Endothelial cell of umbilical vein (primary cell): ENCODE measurements at regions of chr10 and their contacts with region 1.

Region 1: DNA sequence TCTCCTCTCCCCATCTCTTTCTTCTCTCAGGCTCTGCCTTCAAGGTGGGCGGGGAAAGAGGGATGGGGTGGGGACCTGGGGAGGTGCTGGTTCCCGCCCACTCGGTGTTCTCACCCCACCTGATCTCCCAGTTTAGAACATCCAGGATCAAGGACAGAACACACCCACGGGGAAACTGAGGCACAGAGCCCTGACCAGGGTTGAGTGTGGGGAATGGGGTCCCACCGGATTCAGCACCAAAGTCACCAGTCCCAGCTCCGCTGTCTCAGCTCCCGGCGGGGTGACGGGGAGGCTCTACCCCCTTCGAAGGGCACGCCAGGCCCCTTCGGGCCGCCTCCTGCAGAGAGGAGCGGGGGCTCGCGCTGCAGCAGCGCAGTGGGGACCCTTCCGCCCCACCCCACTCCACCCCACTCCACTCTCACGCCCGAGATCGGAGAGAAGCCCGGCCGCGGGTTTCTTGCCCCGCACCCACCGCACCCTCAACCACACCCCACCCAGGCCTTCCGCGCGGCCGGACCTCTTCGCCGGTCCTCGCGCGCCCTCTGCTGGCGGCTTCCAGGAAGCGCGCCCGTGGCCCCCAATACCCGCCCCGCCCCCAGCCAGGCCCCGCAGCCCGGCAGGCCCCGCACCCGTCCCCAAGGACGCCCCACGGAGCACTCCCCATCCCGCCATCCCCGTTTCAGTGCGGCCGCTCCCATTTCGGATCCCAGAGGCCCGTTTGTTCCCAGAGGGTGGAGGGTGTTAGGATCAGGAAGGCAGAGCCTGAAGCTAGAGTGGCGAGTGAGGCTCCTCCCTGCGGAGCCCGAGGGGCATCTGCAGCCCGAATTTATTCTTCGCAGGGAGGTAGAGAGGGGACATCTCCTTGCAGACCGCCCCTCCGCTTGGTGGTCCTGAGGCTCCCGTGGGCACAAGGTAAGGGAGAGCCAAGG is 18.0 kb downstream of the POLL start:
- DNase-seq: peak; percentile 62
- H3K4me3 ChIP-seq: peak overlapping the region in 2 of 3 experiments; percentile 18 to 39
- H3K27ac ChIP-seq: no peak overlapping the region
- H3K4me1 ChIP-seq: peaks cover 7% of the 10 kb centered on the region
- H3K27me3 ChIP-seq: peaks cover 26 to 27% of the 10 kb centered on the region in 2 experiments
- CTCF ChIP-seq: peak; percentile 46 to 90
- POLR2A ChIP-seq: no peak

Region 2: DNA sequence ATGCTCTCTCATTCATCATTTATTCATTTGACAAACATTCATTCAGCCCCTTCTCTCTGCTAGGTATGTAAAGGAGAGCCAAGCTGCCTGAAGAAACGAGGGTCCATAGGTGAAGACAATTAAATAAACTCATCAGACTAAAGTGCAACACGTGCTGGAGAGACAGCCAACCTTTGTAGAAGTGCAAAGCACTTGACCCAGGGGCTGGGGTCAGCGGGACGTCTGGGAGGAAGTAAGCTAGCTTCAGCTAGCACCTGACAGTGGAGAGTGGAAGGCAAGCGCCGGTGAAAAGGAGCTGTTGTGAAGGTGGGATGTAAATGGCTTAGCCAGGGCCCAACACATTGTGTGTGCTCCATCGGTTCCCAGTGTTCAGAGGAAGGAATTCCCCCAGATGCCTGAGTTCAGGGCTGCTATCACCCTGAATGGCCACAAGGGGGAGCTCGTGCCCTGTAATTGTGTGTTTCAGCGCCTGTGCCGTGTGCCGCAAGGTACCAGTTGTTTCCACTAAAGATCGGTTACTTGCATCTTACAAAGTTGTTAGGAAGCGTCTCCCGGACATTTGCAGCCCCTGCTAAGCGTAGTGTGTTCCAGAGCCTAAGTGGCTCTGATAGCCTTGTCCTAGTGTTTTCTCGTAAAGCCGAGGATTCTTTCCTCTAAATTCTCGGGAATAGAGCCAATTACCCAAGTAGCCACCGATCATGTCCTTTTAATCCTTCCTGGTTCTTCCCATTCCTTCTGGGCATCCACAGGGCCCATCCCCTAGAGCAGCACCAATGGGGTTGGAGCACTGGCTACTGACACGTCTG is 408.4 kb before region 1 on chr10:
- CTCF ChIA-PET with region 1: interaction called, 19 read pairs
- POLR2A ChIA-PET with region 1: no interaction called
- dilution Hi-C with region 1: no loop called
- intact Hi-C with region 1: loop called (anchors 1 kb)
- DNase-seq: peak; percentile 74
- H3K4me3 ChIP-seq: no peak overlapping the region
- H3K27ac ChIP-seq: no peak overlapping the region
- H3K4me1 ChIP-seq: no peaks in the 10 kb centered on the region
- H3K27me3 ChIP-seq: peaks cover 25 to 34% of the 10 kb centered on the region in 2 experiments
- CTCF ChIP-seq: peak; percentile 94 to 98
- POLR2A ChIP-seq: no peak

Region 3: DNA sequence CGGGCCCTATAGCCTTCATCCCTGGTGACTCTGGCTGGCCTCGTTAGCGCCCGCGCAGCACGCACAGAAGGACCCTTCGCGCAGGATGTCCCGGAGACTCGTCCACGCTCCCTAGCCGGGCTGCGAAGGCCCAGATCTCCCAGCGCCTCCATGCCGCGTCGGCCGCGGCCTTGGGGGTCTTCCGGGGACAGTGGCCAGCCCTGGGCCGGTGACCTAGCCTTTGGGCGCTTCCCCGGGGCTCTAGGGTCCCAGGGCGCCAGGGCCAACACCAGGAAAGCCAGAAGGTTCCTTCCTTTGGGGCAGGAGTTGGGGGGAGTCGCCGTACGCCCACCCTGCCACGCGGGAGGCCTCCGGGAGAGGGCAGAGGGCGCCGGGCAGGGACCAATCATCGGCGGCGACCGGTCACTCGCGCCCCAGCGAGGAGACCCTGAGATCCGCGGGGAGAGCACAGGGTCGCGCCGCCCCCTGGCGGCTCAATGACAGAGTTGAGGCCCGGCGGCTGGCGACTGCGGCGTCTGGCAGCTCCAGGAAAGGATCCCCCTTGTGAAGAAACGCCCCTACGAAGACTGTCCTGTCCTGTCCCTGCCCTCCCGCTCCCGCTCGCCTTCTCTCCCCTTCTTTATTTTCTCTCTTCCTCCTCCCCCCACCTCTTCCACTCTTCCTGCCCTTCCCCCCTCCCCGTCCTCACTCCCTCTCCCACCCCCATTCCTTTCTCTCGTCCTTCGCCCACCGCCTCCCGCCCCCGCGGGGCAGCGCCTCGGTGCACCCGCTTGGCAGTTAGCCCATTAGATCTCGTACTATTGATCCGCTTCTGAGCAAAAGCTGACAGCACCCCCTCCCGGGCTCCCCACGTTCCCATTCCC is 278.5 kb before region 1 on chr10:
- CTCF ChIA-PET with region 1: interaction called, 45 read pairs
- POLR2A ChIA-PET with region 1: no interaction called
- dilution Hi-C with region 1: no loop called
- intact Hi-C with region 1: no loop called
- DNase-seq: peak; percentile 33
- H3K4me3 ChIP-seq: peak overlapping the region in 2 of 3 experiments; percentile 32 to 46
- H3K27ac ChIP-seq: no peak overlapping the region
- H3K4me1 ChIP-seq: peaks cover 2% of the 10 kb centered on the region
- H3K27me3 ChIP-seq: peaks cover 54 to 56% of the 10 kb centered on the region in 2 experiments
- CTCF ChIP-seq: peak; percentile 61 to 90
- POLR2A ChIP-seq: no peak

Region 4: GRCh38 chr10:101441541-101442455 is 128.3 kb before region 1 on chr10:
- CTCF ChIA-PET with region 1: interaction called, 4 read pairs
- POLR2A ChIA-PET with region 1: no interaction called
- dilution Hi-C with region 1: no loop called
- intact Hi-C with region 1: loop called (anchors 1 kb)
- DNase-seq: peak; percentile 70
- H3K4me3 ChIP-seq: no peak overlapping the region
- H3K27ac ChIP-seq: no peak overlapping the region
- H3K4me1 ChIP-seq: no peaks in the 10 kb centered on the region
- H3K27me3 ChIP-seq: no peaks in the 10 kb centered on the region
- CTCF ChIP-seq: peak; percentile 51 to 61
- POLR2A ChIP-seq: no peak

Region 5: GRCh38 chr10:101580486-101581399 is 10.6 kb after region 1 on chr10:
- CTCF ChIA-PET with region 1: interaction called, 11 read pairs
- POLR2A ChIA-PET with region 1: no interaction called
- dilution Hi-C with region 1: no loop called
- intact Hi-C with region 1: no loop called
- DNase-seq: no peak
- H3K4me3 ChIP-seq: no peak overlapping the region
- H3K27ac ChIP-seq: no peak overlapping the region
- H3K4me1 ChIP-seq: no peaks in the 10 kb centered on the region
- H3K27me3 ChIP-seq: no peaks in the 10 kb centered on the region
- CTCF ChIP-seq: no peak
- POLR2A ChIP-seq: no peak